ENCODE measurements at regions of chr12 and their contacts with region 1.

Region 1: GRCh38 chr12:57899010-57899662 is 42.2 kb upstream of the ATP23 start:
- DNase-seq: peak; percentile 74
- ATAC-seq: peak; percentile 84
- H3K4me3 Mint-ChIP-seq: peak overlapping the region; percentile 61
- H3K27ac Mint-ChIP-seq: peak overlapping the region; percentile 95
- H3K4me1 Mint-ChIP-seq: peaks cover 46% of the 10 kb centered on the region
- H3K27me3 Mint-ChIP-seq: peaks cover 2% of the 10 kb centered on the region

Region 2: DNA sequence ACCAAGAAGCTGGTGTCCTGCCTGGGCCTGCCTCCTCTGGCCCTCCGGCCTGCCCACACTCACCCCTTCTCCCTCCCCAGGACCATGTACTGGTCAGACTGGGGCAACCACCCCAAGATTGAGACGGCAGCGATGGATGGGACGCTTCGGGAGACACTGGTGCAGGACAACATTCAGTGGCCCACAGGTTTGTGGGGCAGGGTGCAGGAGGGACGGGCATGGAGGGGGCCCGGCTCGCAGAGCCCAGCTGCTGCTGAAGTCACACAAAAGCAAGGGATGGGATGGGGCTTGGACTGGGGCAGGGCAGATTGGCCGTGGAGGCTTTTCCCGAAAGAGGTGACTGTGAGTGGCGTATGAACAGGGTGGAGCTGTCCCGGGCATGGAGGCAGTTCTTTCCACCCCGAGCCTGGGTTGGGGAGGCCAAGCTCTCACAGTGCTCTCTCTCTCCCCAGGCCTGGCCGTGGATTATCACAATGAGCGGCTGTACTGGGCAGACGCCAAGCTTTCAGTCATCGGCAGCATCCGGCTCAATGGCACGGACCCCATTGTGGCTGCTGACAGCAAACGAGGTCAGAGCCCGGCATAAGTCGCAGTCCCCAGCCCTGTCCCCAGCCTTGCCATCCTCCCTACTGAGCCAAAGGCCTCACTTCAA is 690.4 kb before region 1 on chr12:
- CTCF ChIA-PET with region 1: no interaction called
- POLR2A ChIA-PET with region 1: no interaction called
- DNase-seq: no peak
- ATAC-seq: no peak
- H3K4me3 Mint-ChIP-seq: no peak overlapping the region
- H3K27ac Mint-ChIP-seq: no peak overlapping the region
- H3K4me1 Mint-ChIP-seq: peaks cover 6% of the 10 kb centered on the region
- H3K27me3 Mint-ChIP-seq: peaks cover 5% of the 10 kb centered on the region

Region 3: GRCh38 chr12:57782608-57783465 is 116.3 kb before region 1 on chr12 and contains the start of gene TSFM:
- CTCF ChIA-PET with region 1: interaction called, 24 read pairs
- POLR2A ChIA-PET with region 1: interaction called, 4 read pairs
- DNase-seq: peak; percentile 98
- ATAC-seq: peak; percentile 87
- H3K4me3 Mint-ChIP-seq: peak within 1 kb of the TSS; percentile 99
- H3K27ac Mint-ChIP-seq: peak within 1 kb of the TSS; percentile 96
- H3K4me1 Mint-ChIP-seq: peaks cover 40% of the 10 kb centered on the region
- H3K27me3 Mint-ChIP-seq: no peaks in the 10 kb centered on the region
- total RNA-seq, gene TSFM: 35.0 to 35.8 TPM

Region 4: GRCh38 chr12:57836442-57837375 is 62.4 kb before region 1 on chr12:
- CTCF ChIA-PET with region 1: interaction called, 119 read pairs
- POLR2A ChIA-PET with region 1: interaction called, 10 read pairs
- DNase-seq: peak; percentile 70
- ATAC-seq: peak; percentile 49
- H3K4me3 Mint-ChIP-seq: peak overlapping the region; percentile 45
- H3K27ac Mint-ChIP-seq: peak overlapping the region; percentile 90
- H3K4me1 Mint-ChIP-seq: peaks cover 93% of the 10 kb centered on the region
- H3K27me3 Mint-ChIP-seq: no peaks in the 10 kb centered on the region

Region 5: DNA sequence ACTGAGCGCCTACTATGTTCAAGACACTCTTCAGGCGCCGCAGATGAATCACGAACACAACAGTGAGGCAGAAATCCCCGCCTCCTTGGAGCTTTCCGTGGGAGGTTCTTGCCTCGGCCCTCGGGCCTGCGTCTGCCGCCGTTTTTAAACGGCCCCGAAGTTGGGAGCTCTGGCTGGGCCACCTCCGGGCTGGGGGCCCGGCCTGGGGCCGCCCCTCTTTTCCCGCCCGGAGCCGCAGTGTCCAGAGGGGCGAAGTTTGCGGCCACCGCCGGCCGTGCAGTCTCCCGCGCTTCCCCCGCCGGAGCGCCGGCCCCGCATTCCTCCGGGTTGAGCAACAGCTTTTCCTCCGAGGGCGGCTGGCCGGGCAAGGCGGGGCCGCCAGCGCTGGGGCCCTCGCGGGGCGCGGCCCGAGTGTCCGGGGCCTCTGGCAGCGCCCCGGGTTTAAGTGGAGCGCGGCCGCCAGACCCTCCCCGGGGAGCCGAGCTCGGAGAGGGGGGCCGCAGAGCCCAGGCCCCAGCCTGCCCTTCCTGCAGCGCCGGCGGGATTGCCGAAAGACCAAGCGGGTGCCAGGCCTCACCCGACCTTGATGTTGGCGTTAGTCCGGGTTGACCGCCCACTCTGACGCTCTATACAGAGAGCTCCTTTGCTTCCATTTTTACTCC is 33.9 kb before region 1 on chr12:
- CTCF ChIA-PET with region 1: interaction called, 12 read pairs
- POLR2A ChIA-PET with region 1: interaction called, 3 read pairs
- DNase-seq: peak; percentile 60
- ATAC-seq: peak; percentile 85
- H3K4me3 Mint-ChIP-seq: peak overlapping the region; percentile 69
- H3K27ac Mint-ChIP-seq: no peak overlapping the region
- H3K4me1 Mint-ChIP-seq: peaks cover 8% of the 10 kb centered on the region
- H3K27me3 Mint-ChIP-seq: peaks cover 20% of the 10 kb centered on the region